IMR-90 (cell line): ENCODE measurements at regions of chr10 and their contacts with region 1.

Region 1: GRCh38 chr10:20020677-20021076 is 204.4 kb downstream of the PLXDC2 start:
- DNase-seq: no peak
- ATAC-seq: no peak
- H3K4me3 ChIP-seq: no peak overlapping the region
- H3K27ac ChIP-seq: no peak overlapping the region
- H3K4me1 ChIP-seq: peaks cover 2% of the 10 kb centered on the region; the same call in 1 of the 2 replicates
- H3K27me3 ChIP-seq: no peaks in the 10 kb centered on the region
- CTCF ChIP-seq: no peak
- POLR2A ChIP-seq: no peak
- RAD21 ChIP-seq: no peak

Region 2: GRCh38 chr10:20075713-20076112 is 55.0 kb after region 1 on chr10:
- CTCF ChIA-PET with region 1: no interaction called
- POLR2A ChIA-PET with region 1: no interaction called
- dilution Hi-C with region 1: no loop called
- in situ Hi-C with region 1: no loop called
- intact Hi-C with region 1: loop called (anchors 5 kb)
- DNase-seq: no peak
- ATAC-seq: no peak
- H3K4me3 ChIP-seq: no peak overlapping the region
- H3K27ac ChIP-seq: no peak overlapping the region
- H3K4me1 ChIP-seq: no peaks in the 10 kb centered on the region
- H3K27me3 ChIP-seq: no peaks in the 10 kb centered on the region
- CTCF ChIP-seq: no peak
- POLR2A ChIP-seq: no peak
- RAD21 ChIP-seq: no peak

Region 3: GRCh38 chr10:20288060-20288459 is 267.4 kb after region 1 on chr10:
- CTCF ChIA-PET with region 1: no interaction called
- POLR2A ChIA-PET with region 1: no interaction called
- dilution Hi-C with region 1: no loop called
- in situ Hi-C with region 1: no loop called
- intact Hi-C with region 1: no loop called
- DNase-seq: no peak
- ATAC-seq: no peak
- H3K4me3 ChIP-seq: no peak overlapping the region
- H3K27ac ChIP-seq: no peak overlapping the region
- H3K4me1 ChIP-seq: no peaks in the 10 kb centered on the region
- H3K27me3 ChIP-seq: no peaks in the 10 kb centered on the region
- CTCF ChIP-seq: no peak
- POLR2A ChIP-seq: no peak
- RAD21 ChIP-seq: no peak